Dendritic cell treated with granulocyte-macrophage colony-stimulating factor and Interleukin-4, amounts not matched to agents 40 ng/mL and 50 ng/mL, for 4 days (primary cell): ENCODE measurements at regions of chr1 and their contacts with region 1.

Region 1: GRCh38 chr1:24635195-24635843 is 7.8 kb upstream of the SRRM1 start:
- H3K4me3 Mint-ChIP-seq: no peak overlapping the region
- H3K27ac Mint-ChIP-seq: no peak overlapping the region
- H3K4me1 Mint-ChIP-seq: peaks cover 23% of the 10 kb centered on the region
- H3K27me3 Mint-ChIP-seq: peaks cover 2% of the 10 kb centered on the region

Region 2: DNA sequence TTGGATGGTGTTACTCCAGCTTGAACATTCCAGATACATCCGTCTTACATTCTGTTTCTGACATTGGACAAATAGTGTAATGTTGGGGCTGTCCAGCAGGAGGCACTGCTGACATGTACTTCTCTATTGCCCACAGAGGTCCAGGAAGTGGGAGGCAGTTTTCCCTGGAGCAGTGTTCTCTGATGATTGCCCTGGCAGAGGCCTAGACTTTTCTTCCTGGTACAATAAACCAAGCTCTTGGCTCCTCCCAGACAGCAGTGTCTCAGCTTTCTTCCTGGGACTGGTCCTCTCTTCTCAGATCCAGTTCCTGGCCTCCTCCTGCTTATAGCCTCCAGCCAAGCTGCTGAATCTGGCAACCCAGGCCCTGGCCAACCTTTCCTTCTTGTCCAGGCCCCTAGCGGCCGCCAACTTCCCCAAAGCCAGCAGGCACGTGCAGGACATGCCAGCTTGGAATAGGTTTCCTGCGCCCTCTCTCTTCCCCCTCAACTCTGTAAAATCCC is 433.3 kb before region 1 on chr1:
- intact Hi-C with region 1: loop called (anchors 10 kb)
- H3K4me3 Mint-ChIP-seq: no peak overlapping the region
- H3K27ac Mint-ChIP-seq: no peak overlapping the region
- H3K4me1 Mint-ChIP-seq: peaks cover 13% of the 10 kb centered on the region
- H3K27me3 Mint-ChIP-seq: peaks cover 21% of the 10 kb centered on the region

Region 3: GRCh38 chr1:24541711-24542346 is 93.5 kb before region 1 on chr1:
- intact Hi-C with region 1: loop called (anchors 1 kb)
- H3K4me3 Mint-ChIP-seq: no peak overlapping the region
- H3K27ac Mint-ChIP-seq: no peak overlapping the region
- H3K4me1 Mint-ChIP-seq: peaks cover 14% of the 10 kb centered on the region
- H3K27me3 Mint-ChIP-seq: no peaks in the 10 kb centered on the region

Region 4: DNA sequence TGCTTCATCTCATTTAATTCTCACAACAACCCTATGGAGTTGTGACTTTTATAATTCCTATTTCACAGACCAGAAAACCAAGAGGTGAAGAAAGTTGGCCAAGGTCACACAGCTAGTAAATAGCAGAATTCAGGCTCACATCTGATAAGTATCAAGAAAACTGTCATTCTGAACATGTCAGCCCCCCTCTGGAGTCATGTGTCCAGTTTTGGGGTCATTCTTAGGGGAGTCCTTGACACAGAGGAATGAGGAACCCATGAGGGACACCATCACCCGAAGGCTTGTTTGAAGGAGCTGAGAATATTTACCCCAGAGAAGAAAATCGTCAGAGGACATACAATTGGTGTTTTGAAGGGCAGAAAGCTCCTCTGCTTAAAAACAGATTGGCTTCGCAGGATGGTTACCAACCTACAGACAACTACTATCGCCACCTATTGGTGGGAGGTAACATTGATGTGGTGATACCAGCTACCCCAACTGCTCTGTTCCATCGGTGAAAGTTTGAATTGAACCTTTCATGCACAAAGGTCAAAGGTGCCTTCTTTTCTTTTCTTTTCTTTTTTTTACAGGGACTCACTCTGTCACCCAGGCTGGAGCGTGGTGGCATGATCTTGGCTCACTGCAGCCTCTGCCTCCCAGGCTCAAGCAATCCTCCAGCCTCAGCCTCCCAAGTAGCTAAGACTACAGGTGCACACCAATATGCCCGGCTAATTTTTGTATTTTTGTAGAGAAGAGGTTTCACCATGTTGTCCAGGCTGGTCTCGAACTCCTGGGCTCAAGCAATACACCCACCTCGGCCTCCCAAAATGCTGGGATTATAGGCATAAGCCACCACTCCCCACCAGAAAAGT is 48.1 kb before region 1 on chr1:
- intact Hi-C with region 1: loop called (anchors 5 kb)
- H3K4me3 Mint-ChIP-seq: no peak overlapping the region
- H3K27ac Mint-ChIP-seq: no peak overlapping the region
- H3K4me1 Mint-ChIP-seq: no peaks in the 10 kb centered on the region
- H3K27me3 Mint-ChIP-seq: peaks cover 15% of the 10 kb centered on the region

Region 5: DNA sequence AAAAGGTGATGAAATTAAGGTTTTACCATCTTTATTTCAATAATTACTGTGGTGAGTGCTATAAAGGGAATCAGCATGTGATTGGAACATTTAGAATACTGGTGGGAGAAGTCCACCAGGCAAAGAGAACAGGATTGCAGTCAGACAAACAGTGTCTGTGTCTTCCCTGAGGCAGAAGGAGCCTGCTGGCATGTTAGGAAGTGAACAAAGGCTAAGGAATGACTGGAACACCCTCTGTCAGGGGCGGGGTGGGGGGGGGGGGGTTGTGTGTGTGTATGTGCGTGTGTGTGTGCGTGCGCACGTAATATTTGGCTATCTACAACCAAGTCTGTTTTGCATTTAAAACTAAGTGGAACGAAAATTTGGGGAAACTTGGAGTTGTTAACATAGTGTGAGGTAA is 38.0 kb after region 1 on chr1:
- intact Hi-C with region 1: no loop called
- H3K4me3 Mint-ChIP-seq: no peak overlapping the region
- H3K27ac Mint-ChIP-seq: no peak overlapping the region
- H3K4me1 Mint-ChIP-seq: no peaks in the 10 kb centered on the region
- H3K27me3 Mint-ChIP-seq: no peaks in the 10 kb centered on the region

Region 6: GRCh38 chr1:24793447-24794131 is 158.3 kb after region 1 on chr1:
- intact Hi-C with region 1: no loop called
- H3K4me3 Mint-ChIP-seq: no peak overlapping the region
- H3K27ac Mint-ChIP-seq: peak overlapping the region; percentile 76
- H3K4me1 Mint-ChIP-seq: peaks cover 24% of the 10 kb centered on the region
- H3K27me3 Mint-ChIP-seq: no peaks in the 10 kb centered on the region